ENCODE measurements at regions of chr7 and their contacts with region 1.

Region 1: DNA sequence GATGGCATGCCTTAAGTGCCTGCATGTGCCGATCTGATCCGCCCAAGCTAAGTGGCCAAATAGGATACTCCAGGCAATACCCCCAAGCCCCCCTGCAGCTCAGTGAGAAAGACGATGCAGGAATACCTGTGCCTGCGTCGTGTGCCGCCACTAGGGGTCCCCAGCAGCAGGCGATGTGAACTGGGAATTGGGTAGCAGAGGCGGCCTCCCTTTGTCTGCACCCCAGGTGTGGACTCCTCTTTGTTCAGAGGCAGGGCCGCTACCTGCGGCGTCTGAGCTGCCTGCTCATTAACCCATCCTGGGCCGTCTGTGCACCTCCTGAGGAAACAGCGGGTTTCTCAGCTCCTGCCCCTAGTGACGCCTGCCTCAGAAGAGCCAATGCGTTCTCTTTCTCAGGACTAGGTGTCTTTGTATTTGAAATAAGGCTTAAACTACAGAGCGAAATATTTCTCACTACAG is 4.8 kb upstream of the CHN2 start:
- DNase-seq: peak; percentile 10
- ATAC-seq: peak; percentile 87
- H3K4me3 ChIP-seq: no peak overlapping the region
- H3K27ac ChIP-seq: no peak overlapping the region
- H3K4me1 ChIP-seq: no peaks in the 10 kb centered on the region
- H3K27me3 ChIP-seq: peaks cover 35% of the 10 kb centered on the region
- CTCF ChIP-seq: peak; percentile 97

Region 2: GRCh38 chr7:29216128-29216527 is 26.4 kb after region 1 on chr7:
- CTCF ChIA-PET with region 1: no interaction called
- POLR2A ChIA-PET with region 1: interaction called, 10 read pairs
- in situ Hi-C with region 1: no loop called
- intact Hi-C with region 1: no loop called
- DNase-seq: no peak
- ATAC-seq: no peak
- H3K4me3 ChIP-seq: no peak overlapping the region
- H3K27ac ChIP-seq: no peak overlapping the region
- H3K4me1 ChIP-seq: no peaks in the 10 kb centered on the region
- H3K27me3 ChIP-seq: peaks cover 20% of the 10 kb centered on the region
- CTCF ChIP-seq: no peak